Left ventricle myocardium inferior (tissue), 1 donor: ENCODE measurements at regions of chr1 and their contacts with region 1.

Region 1: DNA sequence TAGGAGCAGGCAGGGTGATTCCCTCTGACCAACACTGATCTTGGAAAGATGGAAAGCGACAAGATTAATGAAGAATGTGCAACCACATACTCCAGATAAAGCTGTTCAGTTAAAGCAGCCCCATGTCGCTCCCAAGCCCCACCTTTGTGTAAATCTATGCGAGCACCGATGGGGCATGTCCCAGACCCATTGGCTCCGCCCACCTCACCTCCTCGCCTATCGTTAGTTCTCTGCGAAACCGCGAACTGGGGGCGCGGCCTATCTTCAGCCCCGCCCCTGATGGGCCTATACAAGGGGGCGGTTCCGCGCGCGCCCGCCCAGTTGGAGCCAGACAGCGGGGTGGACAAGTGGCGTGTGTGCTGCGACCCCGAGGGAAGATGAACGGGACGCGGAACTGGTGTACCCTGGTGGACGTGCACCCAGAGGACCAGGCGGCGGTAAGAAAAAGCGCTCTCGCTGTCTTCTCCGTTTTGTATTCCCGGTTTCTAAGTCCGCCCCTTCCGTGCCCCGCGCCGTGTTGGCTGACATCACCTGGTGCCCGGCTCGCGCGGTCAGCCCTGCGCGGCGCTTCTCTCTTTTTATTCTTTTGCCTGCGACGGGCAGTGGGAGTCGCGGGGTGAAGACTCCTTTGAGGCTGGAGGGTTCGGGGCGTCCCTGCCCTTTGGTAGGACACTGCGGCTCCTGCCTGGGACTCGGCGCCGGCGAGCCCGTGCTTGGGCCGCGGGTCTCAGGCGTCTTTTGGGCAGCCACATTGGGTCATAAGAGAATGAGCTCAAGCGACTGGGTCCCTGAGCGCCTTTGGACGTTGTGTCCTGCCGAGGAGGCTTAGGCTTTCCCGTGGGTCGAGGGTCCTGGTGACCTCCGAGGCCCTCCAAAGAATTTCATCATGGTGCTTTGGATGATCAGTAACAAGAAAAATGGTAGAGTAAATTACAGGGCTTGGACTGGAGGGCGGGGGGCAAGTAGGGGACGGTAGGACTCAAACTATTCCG is at the start of gene TUFT1:
- DNase-seq: peak; percentile 91
- H3K4me3 ChIP-seq: peak within 1 kb of the TSS; percentile 91
- H3K27ac ChIP-seq: peak within 1 kb of the TSS; percentile 68
- H3K4me1 ChIP-seq: peaks cover 27% of the 10 kb centered on the region
- H3K27me3 ChIP-seq: no peaks in the 10 kb centered on the region
- CTCF ChIP-seq: no peak
- total RNA-seq, gene TUFT1: 3.6 TPM

Region 2: DNA sequence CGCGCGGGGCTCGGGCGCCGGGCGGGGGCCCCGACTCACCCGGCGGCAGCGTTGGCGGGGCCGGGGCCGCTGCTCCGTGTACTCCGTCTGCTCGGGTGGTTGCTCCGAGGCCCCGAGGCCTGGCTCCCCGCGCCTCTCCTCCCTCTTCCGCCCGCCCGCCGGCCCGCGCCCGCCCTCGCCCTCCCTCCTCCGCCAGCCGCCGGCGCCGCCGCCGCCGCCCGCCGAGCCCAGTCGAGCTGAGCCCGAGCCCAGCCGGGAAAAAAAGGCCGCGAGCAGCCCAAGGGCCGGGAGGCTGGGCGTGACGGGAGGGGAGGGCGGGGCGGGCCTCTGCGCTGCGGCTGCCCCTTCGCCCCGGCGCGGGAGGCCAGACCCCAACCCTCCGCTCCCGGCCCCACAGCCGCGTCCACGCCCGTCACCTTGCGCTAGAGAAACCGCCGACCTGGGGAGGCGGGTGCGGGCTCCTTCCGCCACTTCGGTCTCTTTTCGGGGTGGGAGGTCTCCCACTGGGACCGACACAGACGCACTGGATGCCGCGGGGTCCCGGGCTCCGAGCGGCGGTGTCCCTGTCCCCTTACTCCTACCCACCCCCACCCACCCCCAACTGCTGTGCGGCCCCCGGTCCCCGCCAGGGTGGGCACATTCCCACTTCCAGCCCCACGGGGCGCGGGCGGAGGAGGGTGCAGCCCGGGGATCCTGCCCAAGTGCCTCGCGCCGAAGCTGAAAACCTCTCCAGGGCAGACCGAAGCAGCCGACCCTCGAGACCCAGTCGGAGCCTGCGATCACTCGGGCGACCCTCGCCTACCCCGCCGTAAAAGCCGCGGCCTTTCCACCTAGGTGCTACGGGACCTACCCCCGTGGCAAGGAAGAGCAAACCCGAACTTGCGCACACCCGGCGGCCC is 565.5 kb before region 1 on chr1 and contains the start of gene CERS2:
- intact Hi-C with region 1: no loop called
- DNase-seq: peak; percentile 86
- H3K4me3 ChIP-seq: peak within 1 kb of the TSS; percentile 94
- H3K27ac ChIP-seq: peak within 1 kb of the TSS; percentile 99
- H3K4me1 ChIP-seq: peaks cover 78% of the 10 kb centered on the region
- H3K27me3 ChIP-seq: no peaks in the 10 kb centered on the region
- CTCF ChIP-seq: peak; percentile 1
- total RNA-seq, gene CERS2: 78.9 TPM

Region 3: DNA sequence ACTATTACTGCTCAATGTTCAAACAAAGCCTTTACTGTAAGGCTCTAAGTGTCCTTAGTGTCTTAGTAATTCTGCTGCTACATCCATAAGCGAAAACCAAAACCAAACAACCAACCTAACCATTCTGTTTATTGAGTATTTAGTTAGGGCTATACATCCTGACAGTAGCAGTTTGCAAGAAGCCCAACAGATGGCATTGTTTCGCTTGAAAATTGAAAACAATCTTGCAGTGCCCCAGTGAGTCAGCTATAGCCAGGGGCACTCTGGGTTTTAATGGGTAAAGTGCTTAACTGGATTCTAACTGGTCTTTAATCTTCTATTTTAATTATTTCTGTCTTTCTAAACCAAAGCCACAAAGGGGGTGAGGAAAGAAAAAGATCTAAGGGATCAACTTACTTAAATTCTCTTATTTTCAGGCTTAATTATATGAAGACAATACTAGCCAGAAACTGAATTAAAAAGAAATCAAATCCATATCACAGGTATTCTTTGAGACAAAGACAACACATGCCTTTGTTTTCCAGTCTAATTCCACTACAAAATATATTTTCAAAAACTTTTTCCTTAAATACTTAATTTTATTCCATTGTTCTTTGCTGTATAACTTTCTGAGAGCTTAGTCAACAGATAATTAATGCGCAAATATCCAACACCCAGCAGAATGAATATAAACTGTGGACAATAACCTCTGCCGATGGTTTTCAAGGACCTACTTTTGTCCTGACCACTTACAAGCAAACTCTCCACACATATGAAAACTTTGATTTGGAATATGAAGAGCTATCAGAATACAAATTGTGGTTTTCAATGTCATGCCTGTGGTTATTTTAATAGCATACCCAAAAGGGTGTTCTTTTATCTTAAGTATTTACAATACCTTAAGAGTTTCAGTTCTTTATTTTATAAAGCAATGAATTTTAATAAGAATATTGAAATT is 96.2 kb before region 1 on chr1:
- intact Hi-C with region 1: loop called (anchors 10 kb)
- DNase-seq: no peak
- H3K4me3 ChIP-seq: no peak overlapping the region
- H3K27ac ChIP-seq: peak overlapping the region; percentile 14
- H3K4me1 ChIP-seq: peaks cover 66% of the 10 kb centered on the region
- H3K27me3 ChIP-seq: no peaks in the 10 kb centered on the region
- CTCF ChIP-seq: peak; percentile 80

Region 4: DNA sequence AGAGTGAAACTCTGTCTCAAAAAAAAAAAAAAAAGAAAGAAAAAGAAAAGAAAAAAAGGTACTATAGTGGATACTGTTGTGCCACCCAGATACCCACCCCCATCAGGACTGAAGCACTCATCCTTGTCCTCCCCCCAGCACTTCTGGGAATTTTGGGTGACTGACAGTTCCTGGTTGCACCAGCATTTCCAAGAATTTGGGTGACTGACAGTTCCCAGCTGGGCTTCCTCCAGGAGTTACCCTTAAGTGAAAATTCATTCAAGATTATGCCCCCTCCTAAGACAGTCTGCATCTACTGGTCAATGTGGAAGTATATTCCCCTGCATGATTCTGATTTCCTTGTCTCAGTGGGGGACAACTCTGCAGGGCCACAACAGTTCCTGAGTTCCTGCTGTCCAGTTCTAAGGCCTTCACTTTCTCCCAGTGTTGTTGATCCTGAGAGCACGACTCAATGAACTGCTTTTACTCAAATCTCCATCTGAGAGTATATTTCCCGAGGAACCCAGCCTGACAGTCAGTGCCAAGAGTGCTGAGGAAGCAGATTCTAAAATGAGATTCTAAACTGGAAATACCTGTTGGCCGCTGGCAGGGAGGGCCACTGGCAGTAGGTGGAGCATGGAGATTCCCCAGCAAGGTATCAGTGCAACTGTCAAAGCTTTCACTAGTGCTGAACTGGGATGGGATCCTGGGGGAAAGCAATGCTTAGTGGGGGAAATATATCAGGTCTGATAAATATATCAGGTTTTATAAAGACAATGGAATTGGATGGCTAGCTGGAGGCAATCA is 199.5 kb after region 1 on chr1:
- intact Hi-C with region 1: loop called (anchors 10 kb)
- DNase-seq: no peak
- H3K4me3 ChIP-seq: no peak overlapping the region
- H3K27ac ChIP-seq: no peak overlapping the region
- H3K4me1 ChIP-seq: peaks cover 2% of the 10 kb centered on the region
- H3K27me3 ChIP-seq: no peaks in the 10 kb centered on the region
- CTCF ChIP-seq: no peak